Calu3 (cell line): ENCODE measurements at regions of chr6 and their contacts with region 1.

Region 1: DNA sequence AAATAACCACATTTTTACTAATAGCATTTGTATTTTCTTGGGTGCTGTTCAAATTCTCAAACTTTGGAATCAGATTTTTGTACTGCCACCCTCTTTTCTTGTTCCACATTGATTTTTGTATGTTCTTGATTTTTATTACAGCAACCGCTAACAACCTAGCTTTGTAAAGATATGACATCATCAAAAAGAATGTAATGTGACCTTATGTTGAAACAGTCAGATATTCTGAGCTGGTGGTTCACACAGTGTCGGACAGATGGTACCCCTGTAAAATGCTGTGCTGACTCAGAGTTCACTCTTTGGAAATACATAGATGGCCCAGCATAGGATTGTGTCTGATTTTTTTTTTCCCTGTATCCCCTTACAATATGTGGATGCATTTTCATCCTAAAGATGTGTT is 118.9 kb downstream of the QKI start:
- DNase-seq: no peak
- H3K4me3 Mint-ChIP-seq: no peak overlapping the region
- H3K27ac Mint-ChIP-seq: peak overlapping the region; percentile 66
- H3K4me1 Mint-ChIP-seq: peaks cover 42% of the 10 kb centered on the region
- H3K27me3 Mint-ChIP-seq: no peaks in the 10 kb centered on the region
- CTCF ChIP-seq: no peak

Region 2: GRCh38 chr6:163443985-163444533 is 89.4 kb before region 1 on chr6:
- CTCF ChIA-PET with region 1: interaction called, 4 read pairs
- intact Hi-C with region 1: loop called (anchors 5 kb)
- DNase-seq: no peak
- H3K4me3 Mint-ChIP-seq: no peak overlapping the region
- H3K27ac Mint-ChIP-seq: peak overlapping the region; percentile 71
- H3K4me1 Mint-ChIP-seq: peaks cover 54% of the 10 kb centered on the region
- H3K27me3 Mint-ChIP-seq: no peaks in the 10 kb centered on the region
- CTCF ChIP-seq: no peak

Region 3: GRCh38 chr6:163965426-163966348 is 432.2 kb after region 1 on chr6:
- CTCF ChIA-PET with region 1: no interaction called
- intact Hi-C with region 1: no loop called
- DNase-seq: no peak
- H3K4me3 Mint-ChIP-seq: no peak overlapping the region
- H3K27ac Mint-ChIP-seq: no peak overlapping the region
- H3K4me1 Mint-ChIP-seq: no peaks in the 10 kb centered on the region
- H3K27me3 Mint-ChIP-seq: no peaks in the 10 kb centered on the region
- CTCF ChIP-seq: no peak